Breast epithelium (tissue), 4 donors: ENCODE measurements at regions of chr15 and their contacts with region 1.

Region 1: GRCh38 chr15:35998663-35999602 is 453.0 kb upstream of the DPH6 start:
- DNase-seq: no peak
- H3K4me3 ChIP-seq: no peak overlapping the region
- H3K27ac ChIP-seq: no peak overlapping the region
- H3K4me1 ChIP-seq: no peaks in the 10 kb centered on the region
- H3K27me3 ChIP-seq: no peaks in the 10 kb centered on the region
- CTCF ChIP-seq: no peak
- POLR2A ChIP-seq: no peak

Region 2: GRCh38 chr15:36075333-36075732 is 76.4 kb after region 1 on chr15:
- intact Hi-C with region 1: loop called (anchors 2 kb)
- DNase-seq: no peak
- H3K4me3 ChIP-seq: no peak overlapping the region
- H3K27ac ChIP-seq: no peak overlapping the region
- H3K4me1 ChIP-seq: no peaks in the 10 kb centered on the region
- H3K27me3 ChIP-seq: no peaks in the 10 kb centered on the region
- CTCF ChIP-seq: no peak
- POLR2A ChIP-seq: no peak